ENCODE measurements at regions of chr1 and their contacts with region 1.

Region 1: GRCh38 chr1:145978854-145979759 is 14.6 kb downstream of the POLR3GL start:
- DNase-seq: peak; percentile 96
- H3K4me3 ChIP-seq: peak overlapping the region in 3 of 4 donors; percentile 9 to 31 (median 12)
- H3K27ac ChIP-seq: peak overlapping the region; percentile 97 to 99 (median 98)
- H3K4me1 ChIP-seq: peaks cover 55 to 68% (median 59%) of the 10 kb centered on the region in 4 donors
- H3K27me3 ChIP-seq: no peaks in the 10 kb centered on the region
- CTCF ChIP-seq: peak in 4 of 5 experiments; percentile 17 to 53 (median 30)
- EP300 ChIP-seq: peak; percentile 76
- POLR2A ChIP-seq: peak; percentile 80

Region 2: GRCh38 chr1:145751491-145752037 is 227.5 kb before region 1 on chr1:
- in situ Hi-C with region 1: no loop called
- intact Hi-C with region 1: no loop called
- DNase-seq: no peak
- H3K4me3 ChIP-seq: no peak overlapping the region
- H3K27ac ChIP-seq: peak overlapping the region in 3 of 4 donors; percentile 11 to 28 (median 27)
- H3K4me1 ChIP-seq: no peaks in the 10 kb centered on the region
- H3K27me3 ChIP-seq: no peaks in the 10 kb centered on the region
- CTCF ChIP-seq: no peak
- EP300 ChIP-seq: no peak
- POLR2A ChIP-seq: no peak

Region 3: DNA sequence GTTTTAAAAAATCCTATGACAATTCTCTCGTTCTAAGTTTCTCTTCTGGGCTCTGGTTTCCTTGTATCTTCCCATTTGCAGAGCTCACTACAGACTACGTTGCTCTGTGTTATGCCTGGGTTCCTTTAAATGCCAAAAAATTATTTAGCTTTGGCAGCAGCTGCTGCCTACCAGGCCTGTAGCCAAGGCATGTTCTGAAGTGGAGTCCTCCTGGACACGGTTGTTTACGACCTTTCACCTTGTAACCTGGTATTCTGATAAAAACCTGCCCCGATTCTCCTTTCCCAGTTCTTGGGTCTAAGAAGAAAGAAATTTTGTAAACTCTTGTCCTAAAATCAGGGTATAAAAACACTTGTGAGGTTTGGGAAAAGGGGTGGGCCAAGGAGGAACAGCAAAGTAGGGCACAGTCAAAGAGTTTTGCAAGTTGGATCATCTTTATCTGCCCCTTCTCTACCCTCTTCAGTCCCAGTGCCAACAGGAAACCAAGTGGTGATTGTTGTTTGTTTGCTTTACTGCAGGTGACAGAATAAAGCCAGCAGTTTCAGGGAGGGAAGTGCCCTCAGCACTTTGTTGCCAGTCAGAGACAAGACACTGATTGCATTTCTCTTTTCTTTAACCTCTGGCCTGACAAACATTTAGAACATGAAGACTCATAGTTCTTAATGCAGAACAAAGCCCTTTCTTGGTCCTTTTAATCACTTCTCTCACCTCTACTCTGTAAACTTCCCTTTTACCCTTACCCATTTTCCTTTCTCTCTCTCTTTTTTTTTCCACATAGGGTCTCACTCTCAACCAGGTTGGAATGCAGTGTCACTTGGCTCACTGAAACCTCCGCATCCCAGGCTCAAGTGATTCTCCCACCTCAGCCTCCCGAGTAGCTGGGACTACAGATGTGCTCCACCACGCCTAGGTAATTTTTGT is 20.5 kb after region 1 on chr1:
- in situ Hi-C with region 1: no loop called
- intact Hi-C with region 1: loop called (anchors 2 kb)
- DNase-seq: peak; percentile 65
- H3K4me3 ChIP-seq: peak overlapping the region in 2 of 4 donors; percentile 6 to 18
- H3K27ac ChIP-seq: peak overlapping the region; percentile 96 to 99 (median 98)
- H3K4me1 ChIP-seq: peaks cover 9 to 44% (median 31%) of the 10 kb centered on the region in 4 donors
- H3K27me3 ChIP-seq: no peaks in the 10 kb centered on the region
- CTCF ChIP-seq: no peak
- EP300 ChIP-seq: no peak
- POLR2A ChIP-seq: peak; percentile 65

Region 4: DNA sequence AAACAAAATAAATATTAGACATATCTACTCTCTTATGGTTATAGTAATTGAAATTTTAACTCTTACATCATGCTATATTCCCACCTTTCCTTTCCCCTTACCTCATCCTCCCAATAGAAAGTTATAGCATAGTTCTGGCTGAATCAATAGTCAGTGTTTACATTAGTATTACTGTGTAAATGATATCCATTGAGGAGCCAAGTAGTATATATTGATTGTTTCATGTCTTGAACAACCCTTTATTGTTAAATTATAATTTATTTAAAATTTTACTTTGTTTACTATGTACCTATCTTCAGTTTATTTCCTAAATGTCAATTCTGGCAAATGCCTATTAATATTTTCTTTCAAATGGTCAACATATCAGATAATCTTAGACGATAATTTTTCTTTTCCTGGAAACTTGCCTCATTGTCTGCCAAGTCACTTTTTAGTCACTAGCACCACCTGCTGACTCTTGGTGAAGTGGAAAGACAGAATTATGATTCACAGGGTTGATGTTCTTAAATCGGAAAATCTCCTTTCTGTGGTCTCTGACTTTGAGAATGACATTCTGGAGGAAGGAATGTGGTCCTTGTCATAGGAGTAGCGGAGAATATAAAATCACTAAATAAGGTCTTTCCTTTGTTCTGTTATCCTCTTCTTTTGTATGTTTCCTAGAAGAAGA is 33.8 kb after region 1 on chr1:
- in situ Hi-C with region 1: loop called in 2 of 4 experiments (anchors 5 kb)
- intact Hi-C with region 1: loop called (anchors 2 kb)
- DNase-seq: no peak
- H3K4me3 ChIP-seq: no peak overlapping the region
- H3K27ac ChIP-seq: no peak overlapping the region
- H3K4me1 ChIP-seq: peaks cover 0 to 18% (median 2%) of the 10 kb centered on the region in 4 donors
- H3K27me3 ChIP-seq: peaks cover 6% of the 10 kb centered on the region
- CTCF ChIP-seq: peak; percentile 63 to 80 (median 73)
- EP300 ChIP-seq: no peak
- POLR2A ChIP-seq: no peak

Region 5: GRCh38 chr1:146019231-146020057 is 40.3 kb after region 1 on chr1:
- in situ Hi-C with region 1: loop called in 3 of 4 experiments (anchors 5 to 10 kb)
- intact Hi-C with region 1: no loop called
- DNase-seq: no peak
- H3K4me3 ChIP-seq: peak overlapping the region in 1 of 4 donors; percentile 31
- H3K27ac ChIP-seq: no peak overlapping the region
- H3K4me1 ChIP-seq: peaks cover 0 to 10% (median 7%) of the 10 kb centered on the region in 4 donors
- H3K27me3 ChIP-seq: peaks cover 54% of the 10 kb centered on the region
- CTCF ChIP-seq: no peak
- EP300 ChIP-seq: no peak
- POLR2A ChIP-seq: no peak

Region 6: GRCh38 chr1:146049436-146049835 is 70.3 kb after region 1 on chr1:
- in situ Hi-C with region 1: no loop called
- intact Hi-C with region 1: no loop called
- DNase-seq: no peak
- H3K4me3 ChIP-seq: no peak overlapping the region
- H3K27ac ChIP-seq: no peak overlapping the region
- H3K4me1 ChIP-seq: peaks cover 0 to 16% (median 2%) of the 10 kb centered on the region in 4 donors
- H3K27me3 ChIP-seq: no peaks in the 10 kb centered on the region
- CTCF ChIP-seq: no peak
- EP300 ChIP-seq: no peak
- POLR2A ChIP-seq: no peak

Measured in transverse colon (tissue), 4 donors.